PC-3 (cell line): ENCODE measurements at regions of chrX and their contacts with region 1.

Region 1: DNA sequence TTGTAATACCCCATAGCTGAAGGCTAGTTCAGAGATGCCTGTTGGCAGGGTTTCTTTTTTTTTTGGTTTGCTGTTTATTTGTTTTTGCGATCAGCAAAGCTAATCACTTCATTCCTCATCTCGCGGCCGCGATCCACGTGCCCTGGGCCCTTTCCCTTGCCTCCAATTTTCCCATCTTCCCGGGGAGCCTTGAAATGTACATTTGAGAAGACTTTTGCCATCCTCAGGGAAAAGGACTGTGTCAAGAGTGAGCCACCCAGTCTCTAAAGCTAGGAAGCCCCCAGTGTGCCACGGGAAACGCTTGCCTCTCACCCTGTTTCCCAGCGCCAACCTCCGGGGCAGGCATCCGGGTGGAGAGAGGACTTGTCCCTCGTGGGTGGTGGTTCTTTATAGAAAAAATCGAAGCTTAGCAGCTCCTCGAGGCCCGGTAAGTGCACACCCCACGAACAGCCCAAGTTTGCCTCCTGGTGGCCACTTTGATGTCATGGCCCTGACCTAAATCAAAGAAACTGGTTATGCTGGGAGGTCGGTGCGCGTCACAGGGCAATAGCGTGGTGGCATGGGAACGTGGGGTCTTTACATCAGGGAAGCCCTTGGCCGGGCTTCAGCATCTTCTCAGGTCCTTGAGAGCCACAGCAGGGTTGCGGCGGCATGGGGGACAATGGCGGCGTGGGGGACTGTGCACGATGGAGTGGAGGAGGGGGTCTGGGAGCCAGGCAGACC is 42.0 kb downstream of the MAP7D3 start:
- DNase-seq: peak; percentile 50
- ATAC-seq: peak; percentile 57; the same call in 1 of the 2 replicates
- H3K4me3 ChIP-seq: no peak overlapping the region
- H3K27ac ChIP-seq: no peak overlapping the region
- H3K4me1 ChIP-seq: peaks cover 15% of the 10 kb centered on the region
- H3K27me3 ChIP-seq: no peaks in the 10 kb centered on the region
- CTCF ChIP-seq: peak; percentile 69

Region 2: GRCh38 chrX:136028251-136028984 is 180.8 kb before region 1 on chrX:
- CTCF ChIA-PET with region 1: interaction called, 14 read pairs
- POLR2A ChIA-PET with region 1: no interaction called
- intact Hi-C with region 1: loop called (anchors 1 kb)
- DNase-seq: peak; percentile 80
- ATAC-seq: peak; percentile 77
- H3K4me3 ChIP-seq: no peak overlapping the region
- H3K27ac ChIP-seq: no peak overlapping the region
- H3K4me1 ChIP-seq: no peaks in the 10 kb centered on the region
- H3K27me3 ChIP-seq: no peaks in the 10 kb centered on the region
- CTCF ChIP-seq: peak; percentile 79

Region 3: DNA sequence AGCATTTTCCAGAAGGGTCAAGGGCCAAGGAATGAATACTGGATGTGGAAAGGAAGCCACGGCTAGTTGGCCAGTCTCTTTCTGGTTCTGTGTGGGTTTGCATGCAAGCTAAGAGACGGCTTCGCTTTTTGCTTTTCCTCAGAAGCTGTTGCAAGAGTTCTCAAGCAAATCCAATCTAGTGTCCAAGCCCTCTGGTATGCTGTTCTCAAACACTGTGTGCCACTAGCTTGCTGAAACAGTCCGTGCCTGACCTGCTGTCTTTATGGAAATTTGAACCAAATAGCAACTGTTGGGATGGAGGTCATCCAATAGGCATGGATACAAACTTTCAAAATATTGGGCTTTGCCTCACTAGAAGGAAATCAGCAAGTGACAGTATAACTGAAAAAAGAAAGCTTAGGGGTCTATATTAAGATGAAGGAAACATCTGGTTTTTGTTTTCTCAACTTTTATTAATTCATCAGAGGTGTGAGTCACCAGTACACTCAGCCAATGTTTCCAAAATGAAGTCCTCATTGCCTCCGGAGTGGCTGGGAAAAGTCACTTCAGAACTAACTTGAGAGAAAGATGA is 153.4 kb before region 1 on chrX:
- CTCF ChIA-PET with region 1: no interaction called
- POLR2A ChIA-PET with region 1: no interaction called
- intact Hi-C with region 1: no loop called
- DNase-seq: peak; percentile 33
- ATAC-seq: peak; percentile 58
- H3K4me3 ChIP-seq: no peak overlapping the region
- H3K27ac ChIP-seq: peak overlapping the region; percentile 46
- H3K4me1 ChIP-seq: peaks cover 22% of the 10 kb centered on the region
- H3K27me3 ChIP-seq: no peaks in the 10 kb centered on the region
- CTCF ChIP-seq: no peak